Dendritic cell treated with granulocyte-macrophage colony-stimulating factor and Interleukin-4, amounts not matched to agents 40 ng/mL and 50 ng/mL, for 4 days (primary cell): ENCODE measurements at regions of chr21 and their contacts with region 1.

Region 1: GRCh38 chr21:34888569-34889319 is 160.4 kb downstream of the RUNX1 start:
- H3K4me3 Mint-ChIP-seq: peak overlapping the region; percentile 95
- H3K27ac Mint-ChIP-seq: peak overlapping the region; percentile 97
- H3K4me1 Mint-ChIP-seq: peaks cover 10% of the 10 kb centered on the region
- H3K27me3 Mint-ChIP-seq: no peaks in the 10 kb centered on the region

Region 2: DNA sequence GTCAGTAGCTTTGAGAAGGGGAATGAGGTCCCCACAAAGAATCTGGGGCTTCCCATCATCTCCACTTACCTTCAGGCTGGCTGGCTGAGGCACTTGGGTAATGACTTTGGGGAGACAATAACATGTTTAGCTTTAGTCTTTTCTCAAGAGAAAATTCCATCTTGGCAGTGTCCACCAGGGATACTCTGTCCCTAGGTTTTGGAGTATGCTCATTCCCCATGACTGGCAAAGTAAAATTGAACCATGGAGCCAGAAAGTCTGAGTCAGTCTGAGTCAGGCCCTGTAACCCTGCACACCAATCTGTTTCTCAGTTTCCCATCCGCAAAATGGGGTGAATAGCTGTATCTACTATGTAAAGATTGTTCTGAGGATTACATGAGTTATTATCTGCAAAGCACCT is 132.2 kb after region 1 on chr21:
- intact Hi-C with region 1: no loop called
- H3K4me3 Mint-ChIP-seq: no peak overlapping the region
- H3K27ac Mint-ChIP-seq: no peak overlapping the region
- H3K4me1 Mint-ChIP-seq: peaks cover 42% of the 10 kb centered on the region
- H3K27me3 Mint-ChIP-seq: no peaks in the 10 kb centered on the region

Region 3: GRCh38 chr21:35284199-35284598 is 395.5 kb after region 1 on chr21:
- intact Hi-C with region 1: loop called (anchors 5 kb)
- H3K4me3 Mint-ChIP-seq: no peak overlapping the region
- H3K27ac Mint-ChIP-seq: peak overlapping the region; percentile 92
- H3K4me1 Mint-ChIP-seq: peaks cover 46% of the 10 kb centered on the region
- H3K27me3 Mint-ChIP-seq: no peaks in the 10 kb centered on the region

Region 4: DNA sequence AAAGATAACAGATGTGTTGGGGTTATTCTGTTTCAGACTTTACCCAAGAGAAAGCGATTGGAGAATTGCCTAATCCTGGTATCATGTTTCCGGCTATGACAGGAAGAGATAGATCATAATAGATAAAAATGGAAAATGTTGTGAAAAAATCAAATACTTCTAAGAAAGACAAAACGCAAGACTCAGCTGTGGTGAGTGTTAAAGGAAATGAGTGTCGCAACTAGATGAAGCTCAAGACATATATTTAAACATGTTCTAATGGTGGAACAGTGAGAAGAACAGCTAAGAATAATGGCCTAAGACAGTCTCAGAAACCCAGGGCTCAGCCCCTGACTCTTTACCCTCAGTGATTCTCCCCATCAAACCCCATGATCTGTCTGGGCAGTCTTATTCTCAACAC is 587.0 kb after region 1 on chr21:
- intact Hi-C with region 1: loop called (anchors 2 kb)
- H3K4me3 Mint-ChIP-seq: no peak overlapping the region
- H3K27ac Mint-ChIP-seq: peak overlapping the region; percentile 92
- H3K4me1 Mint-ChIP-seq: peaks cover 79% of the 10 kb centered on the region
- H3K27me3 Mint-ChIP-seq: no peaks in the 10 kb centered on the region

Region 5: GRCh38 chr21:35932232-35932911 is 1043.6 kb after region 1 on chr21:
- intact Hi-C with region 1: loop called (anchors 5 kb)
- H3K4me3 Mint-ChIP-seq: no peak overlapping the region
- H3K27ac Mint-ChIP-seq: no peak overlapping the region
- H3K4me1 Mint-ChIP-seq: peaks cover 11% of the 10 kb centered on the region
- H3K27me3 Mint-ChIP-seq: no peaks in the 10 kb centered on the region